ENCODE measurements at regions of chr14 and their contacts with region 1.

Region 1: GRCh38 chr14:95409477-95410307 is 90.0 kb upstream of the CLMN start:
- DNase-seq: no peak
- H3K4me3 Mint-ChIP-seq: no peak overlapping the region
- H3K27ac Mint-ChIP-seq: no peak overlapping the region
- H3K4me1 Mint-ChIP-seq: no peaks in the 10 kb centered on the region
- H3K27me3 Mint-ChIP-seq: no peaks in the 10 kb centered on the region

Region 2: GRCh38 chr14:95424529-95424928 is 14.8 kb after region 1 on chr14:
- intact Hi-C with region 1: no loop called
- DNase-seq: no peak
- H3K4me3 Mint-ChIP-seq: no peak overlapping the region
- H3K27ac Mint-ChIP-seq: no peak overlapping the region
- H3K4me1 Mint-ChIP-seq: no peaks in the 10 kb centered on the region
- H3K27me3 Mint-ChIP-seq: no peaks in the 10 kb centered on the region

Region 3: DNA sequence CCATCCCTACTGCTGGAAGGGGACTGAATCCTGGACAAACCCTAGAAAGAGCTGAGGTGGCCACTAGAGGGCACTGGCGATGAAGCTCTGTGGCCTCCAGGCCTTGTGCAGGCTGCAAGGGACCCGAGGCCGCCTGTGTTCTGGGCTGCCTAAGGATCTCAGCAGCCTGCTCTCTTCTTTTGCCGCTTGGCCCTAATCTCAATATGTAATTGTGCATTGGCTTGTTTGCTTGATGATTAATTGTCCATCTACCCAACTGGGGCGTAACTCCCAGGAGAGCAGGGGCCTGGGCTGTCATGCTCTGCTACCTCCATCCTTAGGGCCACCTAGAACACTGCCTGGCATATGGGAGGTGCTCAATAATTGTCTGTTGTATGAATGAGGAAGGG is 32.9 kb after region 1 on chr14:
- intact Hi-C with region 1: loop called (anchors 1 kb)
- DNase-seq: peak; percentile 56
- H3K4me3 Mint-ChIP-seq: no peak overlapping the region
- H3K27ac Mint-ChIP-seq: peak overlapping the region; percentile 57
- H3K4me1 Mint-ChIP-seq: peaks cover 5% of the 10 kb centered on the region
- H3K27me3 Mint-ChIP-seq: no peaks in the 10 kb centered on the region

Measured in activated T-helper 1 cell treated with anti-CD3 and anti-CD28 coated beads, Interleukin-12 subunit alpha, Interleukin-12 subunit beta, Interleukin-2, Interleukin-4 antibody, amounts not matched to agents 30 ng/mL and 10 ng/mL and 1 ng/mL, durations not matched to agents 14 hours and 24 hours and 36 hours (primary cell).